Mammary epithelial cell (primary cell): ENCODE measurements at regions of chr12 and their contacts with region 1.

Region 1: GRCh38 chr12:68695454-68695853 is 8.7 kb downstream of the NUP107 start:
- DNase-seq: no peak
- H3K4me3 ChIP-seq: no peak overlapping the region
- H3K27ac ChIP-seq: no peak overlapping the region
- H3K4me1 ChIP-seq: no peaks in the 10 kb centered on the region
- H3K27me3 ChIP-seq: no peaks in the 10 kb centered on the region
- CTCF ChIP-seq: no peak

Region 2: DNA sequence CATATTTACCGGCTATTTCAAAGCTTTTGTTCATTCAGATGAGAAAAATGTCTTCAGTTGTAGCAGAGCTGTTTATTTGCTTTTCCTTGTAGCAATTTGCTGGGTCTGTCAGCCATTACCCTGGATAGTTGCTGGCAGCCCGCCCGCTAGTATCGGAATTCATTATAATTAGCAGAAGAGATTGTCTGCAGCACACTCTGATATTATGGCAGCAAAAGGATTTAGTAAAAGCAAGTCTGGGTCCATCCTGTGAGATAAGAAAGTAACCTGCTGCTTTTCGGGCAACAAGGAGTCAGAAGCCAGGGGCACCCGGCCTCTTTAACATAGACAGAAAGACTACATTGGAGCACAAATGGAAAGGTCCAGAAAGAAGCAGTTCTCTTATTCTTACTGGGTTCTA is 44.4 kb after region 1 on chr12:
- CTCF ChIA-PET with region 1: no interaction called
- dilution Hi-C with region 1: no loop called
- in situ Hi-C with region 1: no loop called
- intact Hi-C with region 1: loop called (anchors 5 kb)
- DNase-seq: no peak
- H3K4me3 ChIP-seq: no peak overlapping the region
- H3K27ac ChIP-seq: no peak overlapping the region
- H3K4me1 ChIP-seq: no peaks in the 10 kb centered on the region
- H3K27me3 ChIP-seq: no peaks in the 10 kb centered on the region
- CTCF ChIP-seq: no peak

Region 3: GRCh38 chr12:68899251-68899771 is 203.9 kb after region 1 on chr12:
- CTCF ChIA-PET with region 1: no interaction called
- dilution Hi-C with region 1: no loop called
- in situ Hi-C with region 1: no loop called
- intact Hi-C with region 1: no loop called
- DNase-seq: peak; percentile 67
- H3K4me3 ChIP-seq: no peak overlapping the region
- H3K27ac ChIP-seq: no peak overlapping the region
- H3K4me1 ChIP-seq: no peaks in the 10 kb centered on the region
- H3K27me3 ChIP-seq: no peaks in the 10 kb centered on the region
- CTCF ChIP-seq: peak; percentile 63 to 96

Region 4: DNA sequence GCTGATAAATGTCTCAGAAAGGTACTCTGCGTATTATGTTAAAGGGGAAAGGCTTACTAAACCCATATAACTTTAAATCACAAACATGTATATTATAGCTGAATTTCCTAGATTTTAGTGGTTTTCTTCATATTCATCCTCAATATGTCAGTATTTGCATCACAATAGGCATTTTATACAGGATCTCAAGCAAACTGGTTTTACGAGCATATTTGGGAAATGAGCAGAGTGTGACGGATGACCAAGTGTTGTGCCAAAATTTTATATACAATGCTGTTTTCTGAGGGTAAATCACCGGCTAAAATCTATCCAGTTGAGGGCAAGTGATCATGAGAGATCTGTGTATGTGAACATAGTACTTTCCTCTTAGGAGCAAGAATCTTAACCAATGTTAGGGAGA is 229.1 kb after region 1 on chr12:
- CTCF ChIA-PET with region 1: no interaction called
- dilution Hi-C with region 1: no loop called
- in situ Hi-C with region 1: no loop called
- intact Hi-C with region 1: no loop called
- DNase-seq: peak; percentile 15
- H3K4me3 ChIP-seq: no peak overlapping the region
- H3K27ac ChIP-seq: no peak overlapping the region
- H3K4me1 ChIP-seq: no peaks in the 10 kb centered on the region
- H3K27me3 ChIP-seq: no peaks in the 10 kb centered on the region
- CTCF ChIP-seq: no peak